B cell (primary cell): ENCODE measurements at regions of chr3 and their contacts with region 1.

Region 1: GRCh38 chr3:33131331-33132018 is 17.7 kb downstream of the CRTAP start:
- DNase-seq: peak; percentile 70
- ATAC-seq: peak; percentile 66
- H3K4me3 ChIP-seq: no peak overlapping the region
- H3K4me3 Mint-ChIP-seq: no peak overlapping the region
- H3K27ac ChIP-seq: no peak overlapping the region
- H3K27ac Mint-ChIP-seq: no peak overlapping the region
- H3K4me1 ChIP-seq: no peaks in the 10 kb centered on the region
- H3K4me1 Mint-ChIP-seq: no peaks in the 10 kb centered on the region
- H3K27me3 ChIP-seq: no peaks in the 10 kb centered on the region
- H3K27me3 Mint-ChIP-seq: no peaks in the 10 kb centered on the region
- CTCF ChIP-seq: peak; percentile 89

Region 2: GRCh38 chr3:33113772-33114621 is 17.5 kb before region 1 on chr3 and contains the start of gene CRTAP:
- CTCF ChIA-PET with region 1: interaction called, 14 read pairs
- POLR2A ChIA-PET with region 1: no interaction called
- intact Hi-C with region 1: no loop called
- DNase-seq: peak; percentile 89
- ATAC-seq: peak; percentile 87
- H3K4me3 ChIP-seq: peak within 1 kb of the TSS; percentile 59 to 82 (median 74)
- H3K4me3 Mint-ChIP-seq: peak within 1 kb of the TSS; percentile 94
- H3K27ac ChIP-seq: peak within 1 kb of the TSS; percentile 69 to 76
- H3K27ac Mint-ChIP-seq: peak within 1 kb of the TSS; percentile 94
- H3K4me1 ChIP-seq: peaks cover 43 to 44% of the 10 kb centered on the region in 2 donors
- H3K4me1 Mint-ChIP-seq: peaks cover 48% of the 10 kb centered on the region
- H3K27me3 ChIP-seq: no peaks in the 10 kb centered on the region
- H3K27me3 Mint-ChIP-seq: no peaks in the 10 kb centered on the region
- CTCF ChIP-seq: no peak
- total RNA-seq, gene CRTAP: 55.0 and 57.7 TPM in 2 replicates

Region 3: DNA sequence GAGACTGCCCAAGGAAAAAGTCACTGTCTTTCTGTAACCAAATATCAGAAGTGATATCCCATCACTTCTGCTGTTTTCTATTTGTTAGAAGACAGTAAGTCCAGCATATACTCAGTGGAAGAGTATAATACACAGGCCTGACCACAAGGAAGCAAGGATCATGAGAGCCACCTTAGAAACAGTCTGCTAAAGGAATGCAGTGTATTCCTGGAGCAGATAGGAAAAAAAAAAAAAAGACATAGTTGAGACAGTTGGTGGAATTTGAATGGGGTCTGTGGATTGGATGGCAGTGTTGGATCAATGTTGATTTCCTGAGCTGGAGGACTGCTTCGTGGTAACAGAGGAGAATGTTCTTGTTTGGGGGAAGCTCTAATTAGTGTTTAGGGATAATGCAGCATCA is 119.2 kb after region 1 on chr3:
- CTCF ChIA-PET with region 1: no interaction called
- POLR2A ChIA-PET with region 1: no interaction called
- intact Hi-C with region 1: loop called (anchors 10 kb)
- DNase-seq: no peak
- ATAC-seq: no peak
- H3K4me3 ChIP-seq: no peak overlapping the region
- H3K4me3 Mint-ChIP-seq: no peak overlapping the region
- H3K27ac ChIP-seq: no peak overlapping the region
- H3K27ac Mint-ChIP-seq: no peak overlapping the region
- H3K4me1 ChIP-seq: no peaks in the 10 kb centered on the region
- H3K4me1 Mint-ChIP-seq: no peaks in the 10 kb centered on the region
- H3K27me3 ChIP-seq: peaks cover 0 to 2% (median 0%) of the 10 kb centered on the region in 4 experiments
- H3K27me3 Mint-ChIP-seq: peaks cover 4% of the 10 kb centered on the region
- CTCF ChIP-seq: no peak

Region 4: GRCh38 chr3:33372218-33373081 is 241.0 kb after region 1 on chr3:
- CTCF ChIA-PET with region 1: interaction called, 138 read pairs
- POLR2A ChIA-PET with region 1: no interaction called
- intact Hi-C with region 1: no loop called
- DNase-seq: peak; percentile 68
- ATAC-seq: peak; percentile 49
- H3K4me3 ChIP-seq: no peak overlapping the region
- H3K4me3 Mint-ChIP-seq: no peak overlapping the region
- H3K27ac ChIP-seq: no peak overlapping the region
- H3K27ac Mint-ChIP-seq: no peak overlapping the region
- H3K4me1 ChIP-seq: peaks cover 4 to 6% of the 10 kb centered on the region in 2 donors
- H3K4me1 Mint-ChIP-seq: peaks cover 3% of the 10 kb centered on the region
- H3K27me3 ChIP-seq: peaks cover 0 to 5% (median 1%) of the 10 kb centered on the region in 4 experiments
- H3K27me3 Mint-ChIP-seq: peaks cover 20% of the 10 kb centered on the region
- CTCF ChIP-seq: peak; percentile 93